GM12878 (cell line): ENCODE measurements at regions of chr7 and their contacts with region 1.

Region 1: GRCh38 chr7:38007096-38007495 is 86.7 kb downstream of the EPDR1 start:
- DNase-seq: no peak
- ATAC-seq: no peak
- H3K4me3 ChIP-seq: no peak overlapping the region
- H3K27ac ChIP-seq: no peak overlapping the region
- H3K4me1 ChIP-seq: no peaks in the 10 kb centered on the region
- H3K27me3 ChIP-seq: no peaks in the 10 kb centered on the region
- CTCF ChIP-seq: no peak
- EP300 ChIP-seq: no peak
- POLR2A ChIP-seq: no peak
- RAD21 ChIP-seq: no peak

Region 2: GRCh38 chr7:37908221-37908788 is 98.8 kb before region 1 on chr7:
- CTCF ChIA-PET with region 1: no interaction called
- POLR2A ChIA-PET with region 1: no interaction called
- RAD21 ChIA-PET with region 1: no interaction called
- SMC1A ChIA-PET with region 1: no interaction called
- in situ Hi-C with region 1: no loop called
- intact Hi-C with region 1: no loop called
- DNase-seq: no peak
- ATAC-seq: no peak
- H3K4me3 ChIP-seq: no peak overlapping the region
- H3K27ac ChIP-seq: no peak overlapping the region
- H3K4me1 ChIP-seq: no peaks in the 10 kb centered on the region
- H3K27me3 ChIP-seq: peaks cover under 1 to 2% of the 10 kb centered on the region in 2 experiments; a peak in 1 of 4 replicates
- CTCF ChIP-seq: no peak
- EP300 ChIP-seq: no peak
- POLR2A ChIP-seq: no peak
- RAD21 ChIP-seq: no peak

Region 3: DNA sequence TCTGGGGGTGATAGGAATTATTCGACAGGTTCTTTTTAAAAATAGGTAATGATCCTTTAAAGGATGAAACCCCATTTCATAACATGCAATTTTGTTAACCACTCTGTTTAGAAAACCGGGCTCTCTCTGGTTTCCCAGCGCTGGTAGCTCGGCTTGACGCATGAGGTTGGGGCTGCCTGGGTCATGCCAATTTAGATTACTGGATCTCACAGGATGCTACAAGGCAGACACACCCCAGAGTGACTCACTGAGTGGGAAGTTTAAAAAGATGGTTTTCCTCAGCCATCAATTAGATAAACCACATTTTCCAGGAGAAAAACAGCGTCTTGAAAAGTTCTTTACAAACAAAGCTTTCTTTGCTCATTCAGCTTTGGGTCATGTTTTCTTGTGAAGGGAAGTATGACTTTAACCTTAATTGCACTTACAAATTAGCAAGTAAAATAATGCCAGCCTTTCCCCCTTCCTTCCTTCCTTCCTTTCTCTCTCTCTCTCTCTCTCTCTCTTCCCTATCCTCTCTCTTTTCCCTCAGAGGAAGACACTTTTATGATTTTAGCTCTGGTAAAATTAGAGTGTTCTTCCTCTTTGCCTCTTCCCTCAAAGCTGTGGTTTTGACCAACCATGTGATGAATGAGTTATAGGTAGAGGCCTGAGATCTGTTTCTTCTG is 13.2 kb after region 1 on chr7:
- CTCF ChIA-PET with region 1: interaction called, 5 read pairs
- POLR2A ChIA-PET with region 1: no interaction called
- RAD21 ChIA-PET with region 1: no interaction called
- SMC1A ChIA-PET with region 1: interaction called, 10 read pairs
- in situ Hi-C with region 1: no loop called
- intact Hi-C with region 1: no loop called
- DNase-seq: no peak
- ATAC-seq: no peak
- H3K4me3 ChIP-seq: no peak overlapping the region
- H3K27ac ChIP-seq: no peak overlapping the region
- H3K4me1 ChIP-seq: no peaks in the 10 kb centered on the region
- H3K27me3 ChIP-seq: no peaks in the 10 kb centered on the region; a peak in 1 of 4 replicates
- CTCF ChIP-seq: no peak
- EP300 ChIP-seq: no peak
- POLR2A ChIP-seq: no peak
- RAD21 ChIP-seq: no peak

Region 4: GRCh38 chr7:38178004-38178694 is 171.1 kb after region 1 on chr7 and contains the start of gene STARD3NL:
- CTCF ChIA-PET with region 1: no interaction called
- POLR2A ChIA-PET with region 1: no interaction called
- RAD21 ChIA-PET with region 1: no interaction called
- SMC1A ChIA-PET with region 1: no interaction called
- in situ Hi-C with region 1: no loop called
- intact Hi-C with region 1: no loop called
- DNase-seq: peak; percentile 100
- ATAC-seq: peak; percentile 94
- H3K4me3 ChIP-seq: peak within 1 kb of the TSS; percentile 91
- H3K27ac ChIP-seq: peak within 1 kb of the TSS; percentile 90
- H3K4me1 ChIP-seq: no peaks in the 10 kb centered on the region
- H3K27me3 ChIP-seq: no peaks in the 10 kb centered on the region
- CTCF ChIP-seq: no peak
- EP300 ChIP-seq: no peak
- POLR2A ChIP-seq: peak; percentile 78
- RAD21 ChIP-seq: no peak
- polyA plus RNA-seq, gene STARD3NL: 76.4 to 101 TPM